Heart right ventricle (tissue), 16 donors: ENCODE measurements at regions of chr6 and their contacts with region 1.

Region 1: DNA sequence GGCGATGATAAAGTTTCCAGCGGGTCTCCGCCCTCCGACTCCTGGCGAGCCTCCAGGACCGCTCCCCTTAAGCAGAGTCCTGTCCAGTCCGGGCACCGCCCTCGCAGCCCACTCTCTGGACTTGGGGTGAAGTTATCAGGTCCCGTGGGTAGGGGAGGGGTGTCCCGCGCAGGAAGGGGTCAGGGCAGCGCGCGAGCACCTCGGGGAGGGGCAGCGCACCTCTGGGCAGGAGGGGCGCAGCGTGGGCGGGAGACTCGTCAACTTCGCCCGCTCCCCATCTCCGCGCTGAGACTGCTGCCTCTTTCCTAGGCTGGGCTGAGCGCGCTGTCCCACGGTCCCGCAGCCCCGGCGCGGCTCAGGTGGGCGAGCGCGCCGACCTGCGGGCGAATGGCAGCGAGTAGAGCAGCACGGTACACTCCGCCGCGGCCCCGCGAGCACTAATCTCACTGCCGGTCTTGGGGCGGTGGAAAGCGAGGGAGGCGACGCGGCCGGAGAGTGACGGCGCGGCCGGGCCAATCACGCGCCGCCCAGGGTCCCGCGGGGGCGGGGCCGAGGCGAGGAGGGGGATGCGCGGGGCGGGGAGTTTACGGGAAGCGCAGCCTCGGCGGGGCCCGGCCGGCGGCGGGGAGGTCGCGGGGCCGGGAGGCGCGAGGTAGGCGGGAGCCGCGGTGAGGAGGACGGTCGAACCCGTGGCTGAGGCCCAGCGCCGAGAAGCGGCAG is at the start of gene MAN1A1:
- DNase-seq: peak; percentile 89 to 93
- ATAC-seq: peak; percentile 96 to 98 (median 96)
- H3K4me3 ChIP-seq: peak within 1 kb of the TSS; percentile 81 to 99 (median 94)
- H3K27ac ChIP-seq: peak within 1 kb of the TSS; percentile 88 to 99 (median 97)
- H3K4me1 ChIP-seq: peaks cover 0 to 72% (median 32%) of the 10 kb centered on the region in 9 donors
- H3K27me3 ChIP-seq: no peaks in the 10 kb centered on the region
- CTCF ChIP-seq: peak in 3 of 9 donors; percentile 5 to 27 (median 22)
- total RNA-seq, gene MAN1A1: 6.2 to 22.0 (median 11.7) TPM

Region 2: DNA sequence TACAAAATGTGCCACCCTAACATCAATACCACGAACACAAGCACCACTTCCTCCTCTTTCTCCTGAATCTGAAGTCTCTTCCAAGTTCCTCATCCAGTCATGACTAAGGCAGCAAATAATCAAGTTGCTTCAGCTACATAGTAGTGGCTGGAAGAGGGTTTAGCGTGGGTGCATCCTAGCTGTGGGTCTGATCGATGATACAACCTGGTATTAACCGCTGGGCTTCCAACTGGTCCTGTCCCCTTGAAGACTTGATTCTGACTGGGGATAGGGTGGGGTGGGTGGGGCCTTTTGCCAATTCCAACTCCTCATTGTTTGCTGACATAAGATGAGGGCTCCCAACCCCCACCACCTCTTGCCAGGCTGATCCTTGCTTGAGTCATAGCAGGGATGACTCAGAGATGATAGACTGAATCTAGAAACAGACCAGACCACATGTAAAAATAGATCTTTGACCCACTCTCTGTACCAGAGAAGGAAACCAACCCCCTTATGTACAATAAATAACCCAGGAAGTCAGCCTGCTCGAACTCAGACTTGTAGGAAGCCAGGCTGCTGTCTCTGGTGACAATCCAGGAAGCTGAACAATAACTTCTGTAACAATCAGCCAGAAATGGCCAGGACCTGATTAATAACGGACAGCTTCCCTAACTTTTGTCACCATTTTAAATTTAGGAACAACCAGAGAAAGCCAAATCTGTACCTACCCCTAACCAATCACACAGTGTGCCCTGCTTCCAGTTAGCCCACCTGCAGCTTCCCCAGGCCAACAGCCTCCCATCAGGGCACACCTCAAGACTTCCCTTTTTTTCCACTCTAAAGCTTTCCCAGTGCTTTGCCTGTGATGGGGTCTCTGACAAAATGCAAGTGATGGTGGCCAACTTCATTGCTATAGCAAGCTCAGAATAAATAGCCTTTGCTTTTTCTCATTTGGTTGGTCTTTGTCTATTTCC is 202.1 kb before region 1 on chr6:
- intact Hi-C with region 1: loop called in 5 of 10 experiments (anchors 10 kb)
- DNase-seq: peak in 1 of 2 donors; percentile 30
- ATAC-seq: peak in 7 of 8 donors; percentile 54 to 97 (median 70)
- H3K4me3 ChIP-seq: no peak overlapping the region
- H3K27ac ChIP-seq: peak overlapping the region in 3 of 10 donors; percentile 43 to 65 (median 52)
- H3K4me1 ChIP-seq: peaks cover 0 to 37% (median 13%) of the 10 kb centered on the region in 9 donors
- H3K27me3 ChIP-seq: no peaks in the 10 kb centered on the region
- CTCF ChIP-seq: no peak

Region 3: GRCh38 chr6:119158057-119158848 is 191.2 kb before region 1 on chr6:
- intact Hi-C with region 1: loop called in 2 of 10 experiments (anchors 10 kb)
- DNase-seq: peak; percentile 36 to 42
- ATAC-seq: peak; percentile 77 to 93 (median 86)
- H3K4me3 ChIP-seq: no peak overlapping the region
- H3K27ac ChIP-seq: peak overlapping the region in 5 of 10 donors; percentile 7 to 62 (median 25)
- H3K4me1 ChIP-seq: peaks cover 0 to 19% (median 0%) of the 10 kb centered on the region in 9 donors
- H3K27me3 ChIP-seq: no peaks in the 10 kb centered on the region
- CTCF ChIP-seq: no peak

Region 4: GRCh38 chr6:119172824-119173223 is 176.7 kb before region 1 on chr6:
- intact Hi-C with region 1: loop called in 2 of 10 experiments (anchors 10 kb)
- DNase-seq: no peak
- ATAC-seq: peak in 1 of 8 donors; percentile 19
- H3K4me3 ChIP-seq: no peak overlapping the region
- H3K27ac ChIP-seq: no peak overlapping the region
- H3K4me1 ChIP-seq: peaks cover 0 to 23% (median 9%) of the 10 kb centered on the region in 9 donors
- H3K27me3 ChIP-seq: no peaks in the 10 kb centered on the region
- CTCF ChIP-seq: no peak

Region 5: GRCh38 chr6:119209452-119210205 is 139.9 kb before region 1 on chr6:
- intact Hi-C with region 1: loop called in 1 of 10 experiments (anchors 10 kb)
- DNase-seq: no peak
- ATAC-seq: no peak
- H3K4me3 ChIP-seq: no peak overlapping the region
- H3K27ac ChIP-seq: no peak overlapping the region
- H3K4me1 ChIP-seq: peaks cover 0 to 7% (median 0%) of the 10 kb centered on the region in 9 donors
- H3K27me3 ChIP-seq: no peaks in the 10 kb centered on the region
- CTCF ChIP-seq: no peak

Region 6: GRCh38 chr6:119241111-119241465 is 108.4 kb before region 1 on chr6:
- intact Hi-C with region 1: loop called in 1 of 10 experiments (anchors 5 kb)
- DNase-seq: peak in 1 of 2 donors; percentile 36
- ATAC-seq: peak in 6 of 8 donors; percentile 69 to 85 (median 84)
- H3K4me3 ChIP-seq: no peak overlapping the region
- H3K27ac ChIP-seq: peak overlapping the region in 4 of 10 donors; percentile 46 to 61 (median 56)
- H3K4me1 ChIP-seq: peaks cover 0 to 17% (median 10%) of the 10 kb centered on the region in 9 donors
- H3K27me3 ChIP-seq: no peaks in the 10 kb centered on the region
- CTCF ChIP-seq: no peak